ENCODE measurements at regions of chr2 and their contacts with region 1.

Region 1: GRCh38 chr2:192333642-192334041 is 138.9 kb upstream of the TMEFF2 start:
- DNase-seq: no peak
- H3K4me3 ChIP-seq: no peak overlapping the region
- H3K27ac ChIP-seq: no peak overlapping the region
- H3K4me1 ChIP-seq: no peaks in the 10 kb centered on the region
- H3K27me3 ChIP-seq: peaks cover 4% of the 10 kb centered on the region
- CTCF ChIP-seq: no peak

Region 2: GRCh38 chr2:191691016-191691735 is 642.5 kb before region 1 on chr2:
- CTCF ChIA-PET with region 1: no interaction called
- dilution Hi-C with region 1: no loop called
- in situ Hi-C with region 1: no loop called
- intact Hi-C with region 1: no loop called
- DNase-seq: peak; percentile 63
- H3K4me3 ChIP-seq: no peak overlapping the region
- H3K27ac ChIP-seq: no peak overlapping the region
- H3K4me1 ChIP-seq: peaks cover 40% of the 10 kb centered on the region
- H3K27me3 ChIP-seq: no peaks in the 10 kb centered on the region
- CTCF ChIP-seq: peak; percentile 81 to 85

Region 3: DNA sequence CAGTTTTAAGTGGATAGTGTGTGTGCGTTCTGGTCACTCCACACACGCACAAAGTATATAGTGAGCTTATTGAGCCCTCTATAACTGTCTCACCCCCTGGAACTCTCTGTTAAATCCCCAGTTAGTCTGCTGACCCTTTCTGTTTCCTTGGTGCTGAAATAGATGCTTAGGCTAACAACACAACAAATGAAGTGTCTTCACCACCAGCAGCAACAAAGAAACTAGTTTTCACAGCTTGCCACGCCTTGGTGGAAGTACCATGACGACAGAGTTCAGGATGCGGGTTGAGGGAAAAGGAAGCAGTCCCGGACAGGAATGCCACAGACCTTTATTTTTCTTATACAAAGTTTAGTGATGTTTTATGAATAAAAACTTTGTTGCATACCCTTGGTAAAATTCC is 64.6 kb after region 1 on chr2:
- CTCF ChIA-PET with region 1: no interaction called
- dilution Hi-C with region 1: loop called (anchors 5 kb)
- in situ Hi-C with region 1: no loop called
- intact Hi-C with region 1: no loop called
- DNase-seq: no peak
- H3K4me3 ChIP-seq: no peak overlapping the region
- H3K27ac ChIP-seq: no peak overlapping the region
- H3K4me1 ChIP-seq: no peaks in the 10 kb centered on the region
- H3K27me3 ChIP-seq: no peaks in the 10 kb centered on the region
- CTCF ChIP-seq: no peak

Measured in mammary epithelial cell (primary cell).